PC-3 (cell line): ENCODE measurements at regions of chr3 and their contacts with region 1.

Region 1: DNA sequence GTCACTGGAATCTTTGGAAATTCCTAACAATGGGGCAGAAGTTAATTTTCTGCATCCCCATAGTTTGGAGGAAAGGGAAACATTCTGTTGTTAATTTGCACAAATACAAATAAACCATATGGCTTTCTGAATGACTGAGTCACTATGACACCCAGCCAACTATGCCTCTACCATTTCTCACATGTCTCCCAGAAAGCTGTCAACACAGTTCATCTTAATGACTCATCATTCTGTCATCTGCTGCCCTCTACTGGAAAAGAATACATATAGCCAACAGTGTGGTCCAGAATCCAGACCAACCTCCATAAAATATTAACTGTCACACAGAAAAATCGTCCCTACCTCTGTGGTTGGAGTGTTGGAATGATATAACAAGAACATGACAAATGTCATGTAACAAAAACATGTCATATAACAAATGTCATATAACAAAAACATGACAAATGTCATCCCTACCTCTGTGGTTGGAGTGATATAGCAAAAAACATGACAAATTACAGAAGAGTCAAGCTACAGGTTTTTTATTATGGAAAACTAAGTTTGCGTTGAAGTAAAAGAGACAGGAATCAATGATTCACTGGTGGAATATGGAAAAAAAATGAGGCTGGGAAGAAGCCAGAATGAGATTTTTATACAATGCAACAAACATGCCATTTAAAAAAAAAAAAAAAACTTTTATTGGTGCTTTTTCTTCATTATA is 47.7 kb upstream of the GYG1 start:
- DNase-seq: peak; percentile 93
- ATAC-seq: peak; percentile 83
- H3K4me3 ChIP-seq: no peak overlapping the region
- H3K27ac ChIP-seq: no peak overlapping the region
- H3K4me1 ChIP-seq: peaks cover 11% of the 10 kb centered on the region; the same call in 1 of the 2 replicates
- H3K27me3 ChIP-seq: peaks cover 28% of the 10 kb centered on the region
- CTCF ChIP-seq: peak; percentile 91

Region 2: DNA sequence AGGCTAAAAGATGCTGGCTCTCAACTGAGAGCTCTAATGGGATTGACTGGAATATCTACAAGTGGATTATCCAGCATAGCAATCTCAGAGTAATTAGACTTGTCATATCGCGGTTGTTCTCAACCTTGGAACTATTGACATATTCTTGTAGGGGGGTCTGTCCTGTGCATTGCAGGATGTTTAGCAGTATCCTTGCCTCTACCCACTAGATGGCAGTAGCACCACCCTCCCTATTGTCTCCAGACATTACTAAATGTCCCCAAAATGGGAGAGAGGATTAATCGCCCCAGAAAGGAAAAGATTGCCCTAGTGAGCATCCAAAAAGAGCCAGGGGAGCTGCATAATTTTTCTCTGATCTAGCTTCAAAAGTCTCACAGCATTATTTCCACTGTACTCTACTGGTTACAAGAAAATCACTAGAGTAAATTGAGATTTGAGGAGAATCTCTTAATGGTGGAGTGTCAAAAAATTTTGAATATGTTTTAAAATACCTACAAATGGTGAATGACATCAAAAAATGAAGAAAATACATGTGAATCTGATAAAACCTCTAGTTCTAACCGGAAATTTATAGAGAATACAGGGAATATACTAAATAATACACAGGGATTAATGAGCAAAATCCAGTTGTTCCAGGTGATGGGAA is 634.1 kb before region 1 on chr3:
- CTCF ChIA-PET with region 1: no interaction called
- POLR2A ChIA-PET with region 1: no interaction called
- intact Hi-C with region 1: loop called (anchors 2 kb)
- DNase-seq: peak; percentile 57
- ATAC-seq: peak; percentile 89
- H3K4me3 ChIP-seq: no peak overlapping the region
- H3K27ac ChIP-seq: no peak overlapping the region
- H3K4me1 ChIP-seq: no peaks in the 10 kb centered on the region
- H3K27me3 ChIP-seq: no peaks in the 10 kb centered on the region
- CTCF ChIP-seq: peak; percentile 87

Region 3: GRCh38 chr3:148379763-148380382 is 563.8 kb before region 1 on chr3:
- CTCF ChIA-PET with region 1: no interaction called
- POLR2A ChIA-PET with region 1: no interaction called
- intact Hi-C with region 1: loop called (anchors 1 kb)
- DNase-seq: peak; percentile 64
- ATAC-seq: peak; percentile 91
- H3K4me3 ChIP-seq: no peak overlapping the region
- H3K27ac ChIP-seq: no peak overlapping the region
- H3K4me1 ChIP-seq: no peaks in the 10 kb centered on the region
- H3K27me3 ChIP-seq: no peaks in the 10 kb centered on the region
- CTCF ChIP-seq: peak; percentile 63

Region 4: GRCh38 chr3:148718982-148719862 is 224.4 kb before region 1 on chr3:
- CTCF ChIA-PET with region 1: no interaction called
- POLR2A ChIA-PET with region 1: no interaction called
- intact Hi-C with region 1: loop called (anchors 10 kb)
- DNase-seq: peak; percentile 26
- ATAC-seq: no peak; the same call in 1 of the 2 replicates
- H3K4me3 ChIP-seq: no peak overlapping the region
- H3K27ac ChIP-seq: no peak overlapping the region
- H3K4me1 ChIP-seq: no peaks in the 10 kb centered on the region
- H3K27me3 ChIP-seq: peaks cover 23% of the 10 kb centered on the region; the same call in 1 of the 2 replicates
- CTCF ChIP-seq: peak; percentile 69

Region 5: GRCh38 chr3:148861277-148861869 is 82.3 kb before region 1 on chr3:
- CTCF ChIA-PET with region 1: interaction called, 4 read pairs
- POLR2A ChIA-PET with region 1: no interaction called
- intact Hi-C with region 1: loop called (anchors 1 kb)
- DNase-seq: peak; percentile 72
- ATAC-seq: peak; percentile 70
- H3K4me3 ChIP-seq: no peak overlapping the region
- H3K27ac ChIP-seq: no peak overlapping the region
- H3K4me1 ChIP-seq: no peaks in the 10 kb centered on the region
- H3K27me3 ChIP-seq: peaks cover 47% of the 10 kb centered on the region
- CTCF ChIP-seq: peak; percentile 90

Region 6: DNA sequence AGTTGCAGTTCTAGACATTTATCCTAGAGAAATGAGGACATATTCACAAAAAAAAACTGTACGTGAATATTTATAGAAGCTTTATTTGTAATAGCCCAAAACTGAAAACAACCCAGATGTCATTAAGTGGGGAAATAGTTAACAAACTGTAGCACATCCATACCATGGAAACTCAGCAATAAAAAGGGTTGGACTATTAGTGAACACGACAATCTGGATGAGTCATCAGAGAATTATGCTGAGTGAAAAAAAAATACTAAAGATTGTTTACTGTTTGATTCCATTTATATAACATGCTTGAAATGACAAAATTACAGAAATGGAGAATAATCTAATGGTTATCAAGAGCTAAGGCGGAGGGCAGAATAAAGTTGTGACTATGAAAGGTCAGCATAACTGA is 19.1 kb before region 1 on chr3:
- CTCF ChIA-PET with region 1: no interaction called
- POLR2A ChIA-PET with region 1: no interaction called
- intact Hi-C with region 1: loop called (anchors 2 kb)
- DNase-seq: peak; percentile 68
- ATAC-seq: peak; percentile 77
- H3K4me3 ChIP-seq: no peak overlapping the region
- H3K27ac ChIP-seq: no peak overlapping the region
- H3K4me1 ChIP-seq: peaks cover 8% of the 10 kb centered on the region; the same call in 1 of the 2 replicates
- H3K27me3 ChIP-seq: peaks cover 12% of the 10 kb centered on the region; the same call in 1 of the 2 replicates
- CTCF ChIP-seq: no peak